CD4-positive, alpha-beta memory T cell (primary cell): ENCODE measurements at regions of chr2 and their contacts with region 1.

Region 1: DNA sequence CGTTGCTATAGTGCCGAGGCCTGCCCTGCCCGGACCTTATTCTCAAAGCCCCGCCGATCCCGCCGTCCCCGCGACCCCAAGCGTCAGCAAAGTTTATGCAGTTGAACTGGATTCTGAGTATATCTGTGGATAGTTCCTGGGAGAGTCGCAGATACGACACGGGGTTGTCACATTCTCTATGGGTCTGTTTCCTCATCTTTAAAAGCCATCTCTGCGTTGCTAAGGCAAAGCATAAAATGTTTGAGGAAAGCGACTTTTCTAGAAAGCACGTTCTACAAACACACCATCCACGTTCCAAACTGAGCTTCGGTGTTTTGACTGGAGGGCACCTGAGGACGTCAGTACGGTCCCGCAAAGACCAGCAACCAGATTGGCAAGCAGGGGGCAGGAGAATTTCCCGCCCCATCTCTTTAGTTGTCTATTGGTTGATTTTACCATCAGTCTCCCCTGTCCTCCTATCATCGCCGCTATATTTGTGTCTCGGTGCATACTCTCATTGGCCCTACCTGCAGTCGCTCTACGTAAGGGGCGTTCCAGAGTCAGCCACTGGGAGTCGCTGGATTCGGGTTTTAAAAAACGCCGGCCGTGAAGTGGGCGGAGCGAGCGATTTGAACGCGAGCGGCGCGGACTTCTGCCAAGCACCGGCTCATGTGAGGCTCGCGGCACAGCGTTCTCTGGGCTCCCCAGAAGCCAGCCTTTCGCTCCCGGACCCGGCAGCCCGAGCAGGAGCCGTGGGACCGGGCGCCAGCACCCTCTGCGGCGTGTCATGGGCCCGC is at the start of gene CENPA:
- DNase-seq: peak; percentile 95 to 98 (median 97)
- H3K4me3 ChIP-seq: peak within 1 kb of the TSS; percentile 68 to 93
- H3K4me3 Mint-ChIP-seq: peak within 1 kb of the TSS; percentile 81 to 91 (median 86)
- H3K27ac ChIP-seq: peak within 1 kb of the TSS; percentile 37
- H3K27ac Mint-ChIP-seq: peak within 1 kb of the TSS; percentile 78 to 95 (median 91)
- H3K4me1 ChIP-seq: peaks cover 14% of the 10 kb centered on the region
- H3K4me1 Mint-ChIP-seq: peaks cover 9 to 15% (median 11%) of the 10 kb centered on the region in 4 donors
- H3K27me3 ChIP-seq: no peaks in the 10 kb centered on the region
- H3K27me3 Mint-ChIP-seq: peaks cover 0 to 3% of the 10 kb centered on the region in 2 donors
- total RNA-seq, gene CENPA: 0.32 TPM in 1 of 2 experiments, not detected in the other

Region 2: DNA sequence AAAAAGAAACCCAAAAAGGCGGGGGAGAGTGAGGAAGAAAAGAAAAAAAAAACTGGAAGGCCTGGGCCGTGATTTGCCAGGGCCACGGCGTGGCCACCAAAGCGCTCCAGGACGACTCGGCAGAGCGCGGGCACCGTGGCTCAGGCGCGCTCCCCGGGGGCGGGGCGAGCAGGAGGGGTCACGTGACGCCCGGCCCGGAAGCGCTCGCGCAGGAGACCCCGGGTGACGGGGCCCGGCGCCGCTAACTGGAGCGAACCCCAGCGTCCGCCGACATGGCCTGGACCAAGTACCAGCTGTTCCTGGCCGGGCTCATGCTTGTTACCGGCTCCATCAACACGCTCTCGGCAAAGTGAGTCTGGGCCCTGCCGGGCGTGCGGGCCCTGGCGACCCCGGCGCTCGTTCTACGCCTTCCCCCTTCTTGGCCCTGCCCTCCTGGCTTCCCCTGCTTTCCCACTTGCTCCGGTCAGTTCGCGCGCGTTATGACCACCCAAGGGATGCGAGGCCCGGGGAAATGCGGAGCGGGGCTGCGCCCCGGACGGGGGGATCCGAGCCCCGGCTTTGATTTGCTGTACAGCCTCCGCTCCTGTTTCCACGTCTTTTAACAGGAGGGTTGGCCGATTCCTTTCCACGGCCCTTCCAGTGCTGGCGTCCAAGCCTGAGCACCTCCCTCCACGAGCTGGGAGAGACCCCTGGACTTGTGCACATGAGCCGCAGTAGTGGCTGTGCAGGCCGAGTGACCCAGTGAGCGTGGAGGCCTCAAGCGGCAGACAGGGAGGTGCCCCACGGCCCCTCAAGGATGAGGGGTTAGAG is 21.3 kb before region 1 on chr2 and contains the start of gene SLC35F6:
- CTCF ChIA-PET with region 1: interaction called, 5 read pairs
- POLR2A ChIA-PET with region 1: interaction called, 12 read pairs
- intact Hi-C with region 1: loop called (anchors 1 kb)
- DNase-seq: peak; percentile 79 to 86 (median 84)
- H3K4me3 ChIP-seq: peak within 1 kb of the TSS; percentile 44 to 90
- H3K4me3 Mint-ChIP-seq: peak within 1 kb of the TSS; percentile 91 to 96 (median 94)
- H3K27ac ChIP-seq: peak within 1 kb of the TSS; percentile 88
- H3K27ac Mint-ChIP-seq: peak within 1 kb of the TSS; percentile 79 to 97 (median 95)
- H3K4me1 ChIP-seq: peaks cover 48% of the 10 kb centered on the region
- H3K4me1 Mint-ChIP-seq: peaks cover 21 to 57% (median 39%) of the 10 kb centered on the region in 4 donors
- H3K27me3 ChIP-seq: no peaks in the 10 kb centered on the region
- H3K27me3 Mint-ChIP-seq: peaks cover 0 to 1% of the 10 kb centered on the region in 2 donors
- total RNA-seq, gene SLC35F6: 20.1 to 22.2 TPM

Region 3: GRCh38 chr2:27123302-27124231 is 337.9 kb after region 1 on chr2 and contains the start of gene ABHD1:
- CTCF ChIA-PET with region 1: no interaction called
- POLR2A ChIA-PET with region 1: no interaction called
- intact Hi-C with region 1: no loop called
- DNase-seq: peak; percentile 49 to 76 (median 56)
- H3K4me3 ChIP-seq: peak within 1 kb of the TSS; percentile 55 to 70
- H3K4me3 Mint-ChIP-seq: peak within 1 kb of the TSS; percentile 82 to 96 (median 91)
- H3K27ac ChIP-seq: peak within 1 kb of the TSS; percentile 41
- H3K27ac Mint-ChIP-seq: peak within 1 kb of the TSS; percentile 77 to 92 (median 88)
- H3K4me1 ChIP-seq: peaks cover 18% of the 10 kb centered on the region
- H3K4me1 Mint-ChIP-seq: peaks cover 11 to 30% (median 18%) of the 10 kb centered on the region in 4 donors
- H3K27me3 ChIP-seq: peaks cover 5% of the 10 kb centered on the region
- H3K27me3 Mint-ChIP-seq: peaks cover 11 to 16% of the 10 kb centered on the region in 2 donors
- total RNA-seq, gene ABHD1: 1.3 to 2.1 TPM